Activated T-helper 2 cell treated with anti-CD3 and anti-CD28 coated beads, Interferon-gamma antibody, Interleukin-2, Interleukin-4, amounts not matched to agents 10 μg/mL and 5 μg/mL and 100 μg/mL, durations not matched to agents 14 hours and 24 hours and 36 hours (primary cell): ENCODE measurements at regions of chr15 and their contacts with region 1.

Region 1: DNA sequence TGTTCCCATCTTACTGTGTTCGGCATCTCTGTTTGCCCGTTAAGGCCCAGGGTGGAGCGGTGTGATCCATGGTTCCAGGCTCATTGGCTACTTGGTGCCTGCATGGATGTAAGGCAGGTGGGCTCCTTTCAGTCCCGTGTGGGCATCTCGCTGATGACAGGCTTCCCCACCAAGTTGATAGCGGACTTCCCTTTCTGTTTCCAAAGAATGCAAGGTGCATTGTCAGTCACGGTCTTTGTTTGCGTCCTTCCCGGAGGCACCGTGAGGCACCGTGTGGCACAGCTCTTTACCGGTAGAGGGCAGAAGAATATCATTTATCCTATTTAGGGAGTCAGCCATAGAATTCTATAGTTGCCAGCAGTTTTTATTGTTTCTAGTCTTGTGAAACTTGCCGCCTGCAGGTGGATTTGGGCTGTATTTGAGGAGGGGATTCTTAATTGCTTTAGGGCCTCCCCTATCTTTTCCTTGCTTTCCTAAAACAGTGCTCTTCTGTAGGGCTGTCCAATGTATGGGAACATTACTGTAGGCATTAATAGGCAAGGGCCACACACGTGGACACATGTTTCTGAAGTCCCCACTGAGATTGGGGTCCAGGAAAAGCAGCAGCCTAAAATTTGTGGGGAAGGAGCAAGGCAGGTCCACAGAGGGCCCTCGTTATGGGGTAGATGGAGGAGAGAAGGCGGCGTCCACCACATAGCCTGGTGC is 244.1 kb downstream of the SLCO3A1 start:
- DNase-seq: peak; percentile 23
- H3K4me3 Mint-ChIP-seq: no peak overlapping the region
- H3K27ac Mint-ChIP-seq: no peak overlapping the region
- H3K4me1 Mint-ChIP-seq: peaks cover 54% of the 10 kb centered on the region
- H3K27me3 Mint-ChIP-seq: no peaks in the 10 kb centered on the region

Region 2: GRCh38 chr15:92226014-92226612 is 128.5 kb after region 1 on chr15:
- intact Hi-C with region 1: loop called (anchors 2 kb)
- DNase-seq: no peak
- H3K4me3 Mint-ChIP-seq: no peak overlapping the region
- H3K27ac Mint-ChIP-seq: no peak overlapping the region
- H3K4me1 Mint-ChIP-seq: no peaks in the 10 kb centered on the region
- H3K27me3 Mint-ChIP-seq: no peaks in the 10 kb centered on the region

Region 3: DNA sequence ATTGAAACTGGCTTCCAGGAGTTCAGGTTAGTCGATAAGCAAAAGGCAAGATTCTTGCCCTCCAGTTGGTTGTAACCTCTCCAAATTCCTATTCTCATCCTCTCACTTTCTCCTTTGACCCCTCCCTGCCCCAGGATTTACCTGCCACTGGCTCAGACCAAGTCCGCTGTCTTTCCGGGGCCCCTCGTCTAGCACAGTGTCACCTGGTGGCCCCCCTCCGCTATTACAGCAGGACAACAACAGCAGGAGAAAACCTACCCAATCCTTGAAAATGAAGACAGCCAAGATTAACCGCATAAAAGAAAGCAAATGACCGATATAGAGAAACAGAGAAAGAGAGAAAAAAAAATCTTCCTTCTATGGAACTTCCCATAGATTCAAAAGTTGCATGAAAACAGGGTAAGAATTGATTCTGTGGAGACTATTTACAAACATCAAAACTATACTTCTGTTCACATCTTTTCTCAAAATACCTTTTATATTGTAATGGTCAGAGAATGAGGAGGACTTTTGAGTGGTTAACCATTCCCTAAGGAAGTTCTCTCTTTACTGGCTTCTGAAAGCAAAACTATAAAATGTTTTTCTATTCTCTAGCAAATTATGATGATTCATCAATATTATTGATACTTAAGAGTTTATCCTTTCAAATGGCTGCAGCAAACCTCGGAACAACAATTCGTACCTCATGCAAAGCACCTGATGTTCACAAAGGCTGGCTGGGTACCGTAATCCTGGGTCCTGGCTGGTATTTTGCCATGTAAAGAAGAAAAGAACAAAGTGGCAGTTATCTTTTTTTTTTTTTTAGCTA is 286.1 kb after region 1 on chr15:
- intact Hi-C with region 1: loop called (anchors 1 kb)
- DNase-seq: no peak
- H3K4me3 Mint-ChIP-seq: no peak overlapping the region
- H3K27ac Mint-ChIP-seq: no peak overlapping the region
- H3K4me1 Mint-ChIP-seq: no peaks in the 10 kb centered on the region
- H3K27me3 Mint-ChIP-seq: peaks cover 27% of the 10 kb centered on the region

Region 4: DNA sequence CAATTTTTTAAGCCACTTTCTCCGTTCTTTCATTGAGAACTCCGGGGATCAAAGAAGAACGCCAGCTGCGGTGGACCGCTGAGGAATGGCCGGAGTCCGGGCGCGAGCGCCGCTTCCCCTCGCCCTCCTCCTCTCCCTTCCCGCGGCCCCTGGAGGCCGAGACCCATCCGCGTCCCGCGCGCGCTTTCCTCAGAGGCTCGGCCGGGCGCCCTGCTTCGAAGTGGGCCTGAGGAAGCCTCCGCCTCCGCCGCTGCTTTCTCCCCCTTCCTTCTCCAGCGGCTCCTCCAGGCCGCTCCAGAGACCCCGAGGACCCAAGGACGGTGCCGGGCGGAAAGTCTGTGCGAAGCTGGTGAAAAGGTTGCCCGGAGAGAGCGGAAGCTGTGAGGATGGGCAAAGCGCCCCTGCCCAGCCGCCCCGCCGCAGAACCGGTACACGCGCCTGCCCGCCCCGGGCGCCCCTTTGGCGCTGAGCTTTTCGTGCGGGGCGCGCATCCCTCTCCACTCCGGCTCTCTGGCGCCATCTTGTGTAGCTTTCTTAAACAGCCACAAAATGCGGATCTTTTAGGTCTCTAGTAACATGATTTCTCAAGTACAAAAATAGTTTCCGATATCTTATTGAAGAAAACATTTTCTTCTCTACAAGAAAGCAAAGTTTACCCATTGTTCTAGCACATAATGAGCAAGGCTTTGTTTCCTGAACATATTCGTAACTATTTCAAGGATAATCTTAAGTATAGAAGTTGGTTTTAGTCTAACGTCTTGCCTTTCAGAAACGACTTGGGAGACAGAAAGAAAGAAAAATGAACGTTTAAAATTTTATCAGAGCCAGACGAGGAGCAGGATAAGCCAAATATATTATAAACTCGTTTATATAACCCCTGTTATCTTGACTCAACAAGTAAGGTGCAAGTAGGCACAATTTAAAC is 617.1 kb after region 1 on chr15:
- intact Hi-C with region 1: loop called (anchors 2 kb)
- DNase-seq: peak; percentile 61
- H3K4me3 Mint-ChIP-seq: peak overlapping the region; percentile 73
- H3K27ac Mint-ChIP-seq: no peak overlapping the region
- H3K4me1 Mint-ChIP-seq: peaks cover 7% of the 10 kb centered on the region
- H3K27me3 Mint-ChIP-seq: peaks cover 30% of the 10 kb centered on the region

Region 5: GRCh38 chr15:93087825-93088199 is 990.2 kb after region 1 on chr15:
- intact Hi-C with region 1: loop called (anchors 5 kb)
- DNase-seq: peak; percentile 65
- H3K4me3 Mint-ChIP-seq: peak overlapping the region; percentile 82
- H3K27ac Mint-ChIP-seq: no peak overlapping the region
- H3K4me1 Mint-ChIP-seq: peaks cover 14% of the 10 kb centered on the region
- H3K27me3 Mint-ChIP-seq: peaks cover 60% of the 10 kb centered on the region